ENCODE measurements at regions of chr5 and their contacts with region 1.

Region 1: DNA sequence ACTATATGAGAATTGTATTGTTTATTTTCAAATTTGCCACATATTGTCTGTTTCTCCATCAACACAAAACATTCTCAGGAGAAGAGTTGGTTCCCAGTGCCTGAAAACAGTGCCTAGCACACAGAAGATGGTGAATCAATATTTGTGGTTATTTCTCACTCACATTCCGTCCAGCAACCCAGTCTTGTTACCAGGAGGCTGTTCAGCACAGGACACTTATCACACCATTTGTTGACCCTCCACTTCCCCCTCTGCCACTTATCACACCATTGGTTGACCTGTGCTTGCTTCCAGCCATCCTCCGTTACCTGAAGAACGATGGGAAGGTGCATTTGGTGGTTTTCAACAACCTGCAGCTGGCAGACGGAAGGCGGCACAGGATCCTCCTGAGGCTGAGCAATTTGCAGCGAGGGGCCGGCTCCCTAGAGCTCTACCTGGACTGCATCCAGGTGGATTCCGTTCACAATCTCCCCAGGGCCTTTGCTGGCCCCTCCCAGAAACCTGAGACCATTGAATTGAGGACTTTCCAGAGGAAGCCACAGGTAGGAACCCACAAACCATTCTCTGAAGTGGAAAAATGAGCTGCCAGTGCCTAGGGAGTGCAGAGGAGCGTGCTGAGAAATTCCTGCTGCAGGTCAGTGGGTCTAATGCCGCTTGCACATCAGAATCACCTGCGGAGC is 20.5 kb downstream of the THBS4 start:
- DNase-seq: no peak
- H3K4me3 Mint-ChIP-seq: no peak overlapping the region
- H3K27ac Mint-ChIP-seq: no peak overlapping the region
- H3K4me1 Mint-ChIP-seq: peaks cover 2% of the 10 kb centered on the region
- H3K27me3 Mint-ChIP-seq: no peaks in the 10 kb centered on the region

Region 2: GRCh38 chr5:80033513-80033912 is 22.1 kb before region 1 on chr5:
- CTCF ChIA-PET with region 1: no interaction called
- intact Hi-C with region 1: loop called (anchors 2 kb)
- DNase-seq: peak; percentile 64
- H3K4me3 Mint-ChIP-seq: no peak overlapping the region
- H3K27ac Mint-ChIP-seq: no peak overlapping the region
- H3K4me1 Mint-ChIP-seq: peaks cover 37% of the 10 kb centered on the region
- H3K27me3 Mint-ChIP-seq: peaks cover 40% of the 10 kb centered on the region

Measured in activated naive CD4-positive, alpha-beta T cell treated with anti-CD3 and anti-CD28 coated beads for 36 hours (primary cell).